ENCODE measurements at regions of chr6 and their contacts with region 1.

Region 1: GRCh38 chr6:30600451-30600961 is 16.5 kb downstream of the PPP1R10 start:
- DNase-seq: no peak
- ATAC-seq: no peak
- H3K4me3 ChIP-seq: no peak overlapping the region
- H3K27ac ChIP-seq: no peak overlapping the region
- H3K4me1 ChIP-seq: no peaks in the 10 kb centered on the region; the same call in 1 of the 2 replicates
- H3K27me3 ChIP-seq: no peaks in the 10 kb centered on the region
- CTCF ChIP-seq: no peak
- EP300 ChIP-seq: no peak
- POLR2A ChIP-seq: peak; percentile 47; the same call in 1 of the 2 replicates
- RAD21 ChIP-seq: no peak

Region 2: GRCh38 chr6:30483677-30484279 is 116.7 kb before region 1 on chr6:
- CTCF ChIA-PET with region 1: interaction called, 123 read pairs
- POLR2A ChIA-PET with region 1: interaction called, 4 read pairs
- RAD21 ChIA-PET with region 1: interaction called, 22 read pairs
- SMC1A ChIA-PET with region 1: interaction called, 50 read pairs
- in situ Hi-C with region 1: loop called (anchors 5 kb)
- intact Hi-C with region 1: loop called (anchors 1 kb)
- DNase-seq: peak; percentile 37
- ATAC-seq: peak; percentile 48
- H3K4me3 ChIP-seq: no peak overlapping the region
- H3K27ac ChIP-seq: no peak overlapping the region
- H3K4me1 ChIP-seq: peaks cover 12% of the 10 kb centered on the region; the same call in 1 of the 2 replicates
- H3K27me3 ChIP-seq: peaks cover 2 to 8% of the 10 kb centered on the region in 2 experiments; a peak in 3 of 4 replicates
- CTCF ChIP-seq: peak; percentile 47 to 73 (median 56); a peak in 5 of 6 replicates
- EP300 ChIP-seq: no peak
- POLR2A ChIP-seq: no peak
- RAD21 ChIP-seq: peak; percentile 90

Region 3: DNA sequence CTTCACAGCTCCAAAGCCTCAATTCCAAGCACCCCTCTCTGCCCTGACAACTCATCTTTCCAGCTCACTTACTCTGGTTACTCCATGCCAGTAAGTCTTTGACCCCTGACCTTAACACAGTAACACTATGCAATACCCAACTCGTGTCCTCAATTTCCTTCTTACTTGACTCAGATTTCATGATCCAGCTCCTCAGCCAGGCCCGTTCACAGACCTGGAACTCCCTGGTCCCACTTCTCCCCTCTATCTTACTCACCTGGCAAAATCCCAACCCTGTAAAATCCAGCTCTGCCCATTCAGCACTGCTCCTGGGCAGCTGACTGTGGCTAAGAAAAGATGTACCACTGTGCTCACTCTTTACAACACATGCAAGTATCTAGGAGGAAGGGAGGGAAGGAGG is 52.1 kb before region 1 on chr6:
- CTCF ChIA-PET with region 1: interaction called, 188 read pairs
- POLR2A ChIA-PET with region 1: interaction called, 3 read pairs
- RAD21 ChIA-PET with region 1: interaction called, 18 read pairs
- SMC1A ChIA-PET with region 1: interaction called, 35 read pairs
- in situ Hi-C with region 1: no loop called
- intact Hi-C with region 1: no loop called
- DNase-seq: no peak
- ATAC-seq: no peak
- H3K4me3 ChIP-seq: no peak overlapping the region
- H3K27ac ChIP-seq: no peak overlapping the region
- H3K4me1 ChIP-seq: no peaks in the 10 kb centered on the region
- H3K27me3 ChIP-seq: no peaks in the 10 kb centered on the region
- CTCF ChIP-seq: no peak
- EP300 ChIP-seq: no peak
- POLR2A ChIP-seq: no peak
- RAD21 ChIP-seq: no peak

Region 4: GRCh38 chr6:30616811-30617564 is 16.5 kb after region 1 on chr6 and contains the start of gene PPP1R10:
- CTCF ChIA-PET with region 1: interaction called, 41 read pairs
- POLR2A ChIA-PET with region 1: interaction called, 10 read pairs
- RAD21 ChIA-PET with region 1: interaction called, 4 read pairs
- SMC1A ChIA-PET with region 1: interaction called, 16 read pairs
- in situ Hi-C with region 1: no loop called
- intact Hi-C with region 1: no loop called
- DNase-seq: peak; percentile 100
- ATAC-seq: peak; percentile 81
- H3K4me3 ChIP-seq: peak within 1 kb of the TSS; percentile 80
- H3K27ac ChIP-seq: peak within 1 kb of the TSS; percentile 99
- H3K4me1 ChIP-seq: peaks cover 3% of the 10 kb centered on the region
- H3K27me3 ChIP-seq: no peaks in the 10 kb centered on the region
- CTCF ChIP-seq: no peak
- EP300 ChIP-seq: no peak; a peak in 1 of 4 replicates
- POLR2A ChIP-seq: peak; percentile 97
- RAD21 ChIP-seq: no peak
- polyA plus RNA-seq, gene PPP1R10: 11.3 to 22.6 TPM

Measured in GM12878 (cell line).